Activated CD4-positive, alpha-beta T cell treated with anti-CD3 and anti-CD28 coated beads, Interleukin-2, amount 10 ng/mL, durations not matched to agents 24 days and 14 days (primary cell): ENCODE measurements at regions of chr4 and their contacts with region 1.

Region 1: DNA sequence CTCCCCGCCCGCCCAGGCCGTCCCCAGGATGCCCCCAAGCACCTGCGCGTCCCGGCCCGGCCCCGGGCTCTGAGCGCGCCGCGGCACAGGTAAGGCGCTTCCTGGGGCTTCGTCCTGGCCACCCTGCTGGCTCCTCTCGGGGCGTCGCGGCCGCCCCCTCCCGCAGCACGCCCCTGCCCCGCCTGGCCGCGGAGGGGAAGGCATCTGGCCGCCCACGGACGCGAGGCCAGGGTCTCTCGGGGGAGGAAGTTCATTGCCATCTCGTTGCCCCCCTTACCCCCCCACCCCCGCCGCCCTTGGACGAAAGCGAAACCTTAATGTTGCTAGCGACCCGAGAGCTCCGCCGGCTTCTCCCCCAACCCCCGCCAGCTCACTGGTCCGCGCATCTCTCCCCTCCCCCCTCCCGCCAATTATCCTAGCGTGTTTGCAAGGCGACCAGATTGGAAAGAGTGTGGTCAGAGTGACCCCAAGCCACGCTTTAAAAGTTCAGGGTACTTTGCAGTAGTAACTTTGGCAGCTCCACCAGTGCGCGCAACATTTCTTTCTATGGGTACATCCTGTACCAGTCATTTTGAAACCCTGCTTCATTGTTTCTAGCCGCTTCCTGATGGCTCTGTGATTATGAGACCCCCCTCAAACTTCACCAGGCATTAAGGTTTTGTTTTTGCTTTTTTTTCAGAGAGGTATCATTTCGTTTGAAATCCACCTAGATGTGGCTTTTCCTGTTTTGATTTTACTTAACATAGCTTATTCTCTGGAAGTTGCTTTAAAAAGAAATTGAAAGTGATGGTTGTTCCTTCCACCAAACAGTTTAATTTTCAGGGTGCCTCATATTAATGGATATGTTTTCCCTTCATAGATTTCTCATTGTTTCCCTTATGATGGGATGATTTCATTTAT is 626 bp downstream of the TBC1D1 start:
- DNase-seq: peak; percentile 90
- H3K4me3 Mint-ChIP-seq: peak overlapping the region; percentile 90
- H3K27ac Mint-ChIP-seq: peak overlapping the region; percentile 95
- H3K4me1 Mint-ChIP-seq: peaks cover 42% of the 10 kb centered on the region
- H3K27me3 Mint-ChIP-seq: peaks cover 2% of the 10 kb centered on the region

Region 2: GRCh38 chr4:37603070-37603468 is 288.4 kb before region 1 on chr4:
- intact Hi-C with region 1: loop called (anchors 1 kb)
- DNase-seq: peak; percentile 93
- H3K4me3 Mint-ChIP-seq: peak overlapping the region; percentile 4
- H3K27ac Mint-ChIP-seq: peak overlapping the region; percentile 35
- H3K4me1 Mint-ChIP-seq: peaks cover 20% of the 10 kb centered on the region
- H3K27me3 Mint-ChIP-seq: no peaks in the 10 kb centered on the region

Region 3: DNA sequence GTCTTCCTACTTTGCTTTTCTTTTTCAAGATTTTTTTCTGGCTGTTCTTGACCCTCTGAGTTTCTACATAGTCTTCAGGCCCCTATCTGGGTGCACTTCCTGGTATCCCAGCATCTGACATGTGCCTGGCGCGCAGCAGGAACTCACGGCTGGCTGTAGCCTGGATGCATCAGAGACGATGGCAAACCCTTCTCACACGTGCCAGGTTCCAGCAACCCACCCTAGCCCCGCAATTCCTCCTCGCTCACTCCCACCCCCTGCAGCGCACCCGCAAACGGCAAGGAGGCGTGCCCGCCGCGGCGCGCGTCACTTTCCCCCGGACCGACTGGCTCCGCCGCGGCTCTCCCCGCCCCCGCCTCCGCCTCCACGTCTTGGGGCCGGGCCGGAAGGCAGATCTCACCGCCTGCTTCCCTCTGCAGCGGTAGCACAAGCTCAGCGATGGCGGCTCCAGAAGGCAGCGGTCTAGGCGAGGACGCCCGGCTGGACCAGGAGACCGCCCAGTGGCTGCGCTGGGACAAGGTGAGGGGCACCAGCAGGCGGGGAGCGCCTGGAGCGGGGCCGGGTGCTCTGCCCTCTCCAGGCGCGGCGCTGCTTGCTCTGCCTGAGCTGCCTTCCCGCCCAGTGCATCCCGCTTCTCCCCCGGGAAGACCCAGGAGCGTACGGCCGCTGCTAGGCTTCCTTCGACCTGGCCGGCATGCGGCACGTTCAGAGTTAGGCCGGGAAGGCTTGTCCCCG is 65.0 kb before region 1 on chr4 and contains the start of gene PGM2:
- intact Hi-C with region 1: loop called (anchors 1 kb)
- DNase-seq: peak; percentile 98
- H3K4me3 Mint-ChIP-seq: peak within 1 kb of the TSS; percentile 95
- H3K27ac Mint-ChIP-seq: peak within 1 kb of the TSS; percentile 91
- H3K4me1 Mint-ChIP-seq: peaks cover 32% of the 10 kb centered on the region
- H3K27me3 Mint-ChIP-seq: peaks cover 1% of the 10 kb centered on the region
- total RNA-seq, gene PGM2: 53.4 and 55.1 TPM in 2 replicates

Region 4: GRCh38 chr4:37908488-37909331 is 17.2 kb after region 1 on chr4:
- intact Hi-C with region 1: no loop called
- DNase-seq: no peak
- H3K4me3 Mint-ChIP-seq: no peak overlapping the region
- H3K27ac Mint-ChIP-seq: no peak overlapping the region
- H3K4me1 Mint-ChIP-seq: peaks cover 2% of the 10 kb centered on the region
- H3K27me3 Mint-ChIP-seq: no peaks in the 10 kb centered on the region

Region 5: DNA sequence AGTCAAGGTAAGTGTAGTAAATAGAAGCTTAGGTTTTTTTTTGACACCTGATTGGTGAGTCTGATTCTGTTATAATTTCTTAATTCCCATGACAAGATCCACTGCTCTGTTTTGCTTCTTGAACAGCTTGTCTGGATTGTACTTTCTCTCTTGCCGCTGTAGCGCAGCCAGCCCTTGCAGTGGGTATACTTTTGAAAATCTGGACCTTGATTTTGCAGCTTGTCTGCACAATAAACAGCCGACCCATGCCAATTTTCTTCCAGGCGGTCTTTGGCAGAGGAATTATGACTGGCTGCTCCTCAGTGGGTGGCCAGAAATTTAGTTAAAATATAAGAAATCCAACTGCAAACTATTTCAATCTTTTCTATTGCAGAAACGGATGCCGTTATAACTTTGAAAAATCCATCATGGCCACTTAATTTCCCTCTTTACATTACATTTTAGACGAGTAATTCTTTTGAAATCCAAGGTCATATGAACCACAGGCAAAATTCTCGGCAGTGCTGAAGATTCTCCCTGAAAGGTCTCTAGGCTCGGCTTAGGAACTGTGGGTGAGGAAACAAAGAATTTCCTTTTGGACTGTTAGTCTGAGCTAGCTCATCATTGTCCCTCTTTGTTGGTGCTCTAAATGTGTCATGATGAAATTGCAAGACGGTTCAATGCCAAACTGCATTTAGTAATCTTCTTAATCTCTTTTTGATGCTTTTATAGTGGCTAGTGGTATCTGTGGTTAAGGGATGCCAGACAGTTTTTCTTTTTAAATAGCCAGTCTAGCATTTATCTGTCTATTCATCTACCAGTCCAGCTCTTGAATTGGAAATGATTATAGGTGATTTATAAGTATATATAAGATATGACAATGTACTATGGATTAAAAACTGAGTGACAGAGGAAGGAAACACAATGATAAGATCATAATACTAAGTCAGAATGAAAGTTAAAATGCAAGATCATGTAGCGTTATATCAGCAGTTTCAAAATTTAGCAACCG is 37.2 kb after region 1 on chr4:
- intact Hi-C with region 1: loop called (anchors 2 kb)
- DNase-seq: no peak
- H3K4me3 Mint-ChIP-seq: no peak overlapping the region
- H3K27ac Mint-ChIP-seq: no peak overlapping the region
- H3K4me1 Mint-ChIP-seq: peaks cover 22% of the 10 kb centered on the region
- H3K27me3 Mint-ChIP-seq: no peaks in the 10 kb centered on the region

Region 6: GRCh38 chr4:37977471-37978247 is 86.1 kb after region 1 on chr4:
- intact Hi-C with region 1: loop called (anchors 1 kb)
- DNase-seq: peak; percentile 93
- H3K4me3 Mint-ChIP-seq: peak overlapping the region; percentile 87
- H3K27ac Mint-ChIP-seq: peak overlapping the region; percentile 86
- H3K4me1 Mint-ChIP-seq: peaks cover 24% of the 10 kb centered on the region
- H3K27me3 Mint-ChIP-seq: peaks cover 2% of the 10 kb centered on the region

Region 7: DNA sequence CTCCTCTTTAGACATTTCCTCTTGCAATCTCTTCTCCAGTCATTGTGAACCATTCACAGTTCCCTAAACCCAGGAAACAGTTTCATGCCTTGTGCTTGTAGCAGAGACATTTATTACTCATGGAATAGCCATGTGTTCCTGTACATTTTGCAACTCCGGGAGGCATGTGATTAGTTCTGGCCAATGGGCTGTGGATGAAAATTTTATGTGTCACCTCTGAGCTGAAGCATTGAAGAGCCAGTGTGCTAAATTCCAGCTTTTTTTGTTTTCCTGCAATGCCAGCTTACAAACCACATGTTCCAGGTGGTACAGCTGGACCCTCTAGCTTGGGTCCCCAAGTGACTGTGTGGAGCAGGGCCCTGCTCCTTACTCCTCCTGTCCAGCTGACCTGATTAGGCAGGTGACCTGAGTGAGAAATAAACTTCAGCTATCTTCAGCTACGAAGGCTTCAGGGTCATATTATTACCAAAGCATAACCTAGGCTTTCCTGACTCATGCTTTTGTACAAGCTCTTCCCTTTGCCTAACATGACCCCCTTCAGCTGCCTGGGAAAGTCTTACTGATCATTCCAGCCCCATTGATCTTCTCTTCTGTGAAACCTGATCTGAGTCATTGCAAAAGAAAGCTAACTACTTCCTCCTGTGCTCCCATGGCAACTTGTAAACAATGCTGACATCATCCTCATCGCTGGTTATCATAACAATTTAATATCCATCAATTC is 269.1 kb after region 1 on chr4:
- intact Hi-C with region 1: loop called (anchors 1 kb)
- DNase-seq: peak; percentile 88
- H3K4me3 Mint-ChIP-seq: peak overlapping the region; percentile 5
- H3K27ac Mint-ChIP-seq: peak overlapping the region; percentile 84
- H3K4me1 Mint-ChIP-seq: peaks cover 59% of the 10 kb centered on the region
- H3K27me3 Mint-ChIP-seq: peaks cover 7% of the 10 kb centered on the region